ENCODE measurements at regions of chr16 and their contacts with region 1.

Region 1: DNA sequence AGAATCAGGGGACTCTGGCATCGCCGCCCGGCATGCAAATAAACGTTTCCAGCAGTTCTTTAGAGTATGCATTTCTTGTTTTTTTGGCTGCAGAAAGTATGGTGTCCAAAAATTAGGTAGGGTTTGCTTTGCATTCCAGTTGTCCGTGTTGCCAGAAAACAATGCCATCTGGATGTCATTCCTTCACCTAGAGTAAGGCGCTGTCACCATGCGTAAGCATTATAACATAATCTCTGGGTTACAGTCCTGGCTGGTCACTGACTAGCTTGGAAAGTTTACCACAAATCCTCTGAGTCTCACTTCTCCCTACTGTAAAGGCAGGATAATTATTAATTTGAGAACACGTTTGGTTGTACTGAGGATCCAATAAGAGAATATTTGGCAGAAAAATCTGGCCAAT is 457.7 kb downstream of the XYLT1 start:
- DNase-seq: no peak
- ATAC-seq: no peak
- H3K4me3 ChIP-seq: peak overlapping the region; percentile 44
- H3K4me3 Mint-ChIP-seq: peak overlapping the region; percentile 42 to 89 (median 86)
- H3K27ac ChIP-seq: peak overlapping the region; percentile 2
- H3K27ac Mint-ChIP-seq: peak overlapping the region; percentile 85 to 98 (median 93)
- H3K4me1 ChIP-seq: peaks cover 5 to 8% of the 10 kb centered on the region in 2 donors
- H3K4me1 Mint-ChIP-seq: peaks cover 8 to 34% (median 22%) of the 10 kb centered on the region in 7 donors
- H3K27me3 ChIP-seq: no peaks in the 10 kb centered on the region
- H3K27me3 Mint-ChIP-seq: peaks cover 0 to 4% (median 0%) of the 10 kb centered on the region in 5 donors

Region 2: GRCh38 chr16:16992975-16993765 is 19.9 kb before region 1 on chr16:
- CTCF ChIA-PET with region 1: no interaction called
- POLR2A ChIA-PET with region 1: interaction called, 4 read pairs
- intact Hi-C with region 1: loop called in 1 of 2 experiments (anchors 1 kb)
- DNase-seq: peak in 6 of 9 donors; percentile 13 to 42 (median 33)
- ATAC-seq: peak; percentile 68
- H3K4me3 ChIP-seq: peak overlapping the region; percentile 44
- H3K4me3 Mint-ChIP-seq: peak overlapping the region; percentile 42 to 89 (median 73)
- H3K27ac ChIP-seq: peak overlapping the region; percentile 24
- H3K27ac Mint-ChIP-seq: peak overlapping the region; percentile 50 to 93 (median 82)
- H3K4me1 ChIP-seq: peaks cover 9 to 17% of the 10 kb centered on the region in 2 donors
- H3K4me1 Mint-ChIP-seq: peaks cover 10 to 33% (median 28%) of the 10 kb centered on the region in 7 donors
- H3K27me3 ChIP-seq: no peaks in the 10 kb centered on the region
- H3K27me3 Mint-ChIP-seq: no peaks in the 10 kb centered on the region

Region 3: GRCh38 chr16:17026600-17027242 is 13.7 kb after region 1 on chr16:
- CTCF ChIA-PET with region 1: interaction called, 3 read pairs
- POLR2A ChIA-PET with region 1: interaction called, 3 read pairs
- intact Hi-C with region 1: loop called in 1 of 2 experiments (anchors 1 kb)
- DNase-seq: peak in 8 of 9 donors; percentile 30 to 63 (median 54)
- ATAC-seq: peak; percentile 86
- H3K4me3 ChIP-seq: no peak overlapping the region
- H3K4me3 Mint-ChIP-seq: peak overlapping the region; percentile 48 to 80 (median 70)
- H3K27ac ChIP-seq: peak overlapping the region; percentile 4
- H3K27ac Mint-ChIP-seq: peak overlapping the region in 8 of 9 donors; percentile 45 to 89 (median 73)
- H3K4me1 ChIP-seq: peaks cover 20% of the 10 kb centered on the region in 2 donors
- H3K4me1 Mint-ChIP-seq: peaks cover 14 to 48% (median 40%) of the 10 kb centered on the region in 7 donors
- H3K27me3 ChIP-seq: no peaks in the 10 kb centered on the region
- H3K27me3 Mint-ChIP-seq: peaks cover 0 to 2% (median 0%) of the 10 kb centered on the region in 5 donors

Region 4: GRCh38 chr16:17070882-17071592 is 58.0 kb after region 1 on chr16:
- CTCF ChIA-PET with region 1: no interaction called
- POLR2A ChIA-PET with region 1: no interaction called
- intact Hi-C with region 1: loop called in 1 of 2 experiments (anchors 2 kb)
- DNase-seq: peak; percentile 37 to 87 (median 76)
- ATAC-seq: peak; percentile 89
- H3K4me3 ChIP-seq: peak overlapping the region; percentile 38
- H3K4me3 Mint-ChIP-seq: peak overlapping the region; percentile 59 to 89 (median 82)
- H3K27ac ChIP-seq: peak overlapping the region; percentile 73
- H3K27ac Mint-ChIP-seq: peak overlapping the region in 8 of 9 donors; percentile 83 to 96 (median 92)
- H3K4me1 ChIP-seq: peaks cover 0 to 4% of the 10 kb centered on the region in 2 donors
- H3K4me1 Mint-ChIP-seq: peaks cover 8 to 37% (median 25%) of the 10 kb centered on the region in 7 donors
- H3K27me3 ChIP-seq: no peaks in the 10 kb centered on the region
- H3K27me3 Mint-ChIP-seq: peaks cover 0 to 8% (median 0%) of the 10 kb centered on the region in 5 donors

Region 5: GRCh38 chr16:17184026-17184425 is 171.0 kb after region 1 on chr16:
- CTCF ChIA-PET with region 1: no interaction called
- POLR2A ChIA-PET with region 1: no interaction called
- intact Hi-C with region 1: no loop called
- DNase-seq: no peak
- ATAC-seq: no peak
- H3K4me3 ChIP-seq: no peak overlapping the region
- H3K4me3 Mint-ChIP-seq: no peak overlapping the region
- H3K27ac ChIP-seq: no peak overlapping the region
- H3K27ac Mint-ChIP-seq: no peak overlapping the region
- H3K4me1 ChIP-seq: no peaks in the 10 kb centered on the region
- H3K4me1 Mint-ChIP-seq: peaks cover 0 to 14% (median 0%) of the 10 kb centered on the region in 7 donors
- H3K27me3 ChIP-seq: no peaks in the 10 kb centered on the region
- H3K27me3 Mint-ChIP-seq: no peaks in the 10 kb centered on the region